IMR-90 (cell line): ENCODE measurements at regions of chr12 and their contacts with region 1.

Region 1: DNA sequence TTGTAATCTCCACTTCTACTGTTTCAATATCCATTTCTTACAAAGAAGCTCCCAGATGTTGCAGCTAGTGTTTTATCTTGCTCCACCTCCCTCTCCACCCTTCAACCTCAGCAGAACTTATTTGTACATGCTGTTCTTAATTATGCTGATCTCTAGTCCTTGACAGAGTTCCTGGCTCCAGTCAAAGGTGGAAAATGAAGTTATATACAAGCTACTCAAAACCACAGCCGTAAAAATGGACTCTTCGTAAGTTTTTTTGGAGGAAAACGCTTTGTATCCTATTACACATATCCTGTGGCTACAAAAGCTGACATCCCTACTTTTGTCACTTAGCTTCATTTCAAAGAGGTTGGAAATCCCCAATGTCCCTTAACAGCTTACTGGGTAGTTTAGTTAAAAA is 1.3 kb downstream of the CLEC1A start:
- DNase-seq: no peak
- ATAC-seq: no peak
- H3K4me3 ChIP-seq: no peak overlapping the region
- H3K27ac ChIP-seq: no peak overlapping the region
- H3K4me1 ChIP-seq: peaks cover 1% of the 10 kb centered on the region; the same call in 1 of the 2 replicates
- H3K27me3 ChIP-seq: no peaks in the 10 kb centered on the region
- CTCF ChIP-seq: no peak
- POLR2A ChIP-seq: no peak
- RAD21 ChIP-seq: no peak

Region 2: DNA sequence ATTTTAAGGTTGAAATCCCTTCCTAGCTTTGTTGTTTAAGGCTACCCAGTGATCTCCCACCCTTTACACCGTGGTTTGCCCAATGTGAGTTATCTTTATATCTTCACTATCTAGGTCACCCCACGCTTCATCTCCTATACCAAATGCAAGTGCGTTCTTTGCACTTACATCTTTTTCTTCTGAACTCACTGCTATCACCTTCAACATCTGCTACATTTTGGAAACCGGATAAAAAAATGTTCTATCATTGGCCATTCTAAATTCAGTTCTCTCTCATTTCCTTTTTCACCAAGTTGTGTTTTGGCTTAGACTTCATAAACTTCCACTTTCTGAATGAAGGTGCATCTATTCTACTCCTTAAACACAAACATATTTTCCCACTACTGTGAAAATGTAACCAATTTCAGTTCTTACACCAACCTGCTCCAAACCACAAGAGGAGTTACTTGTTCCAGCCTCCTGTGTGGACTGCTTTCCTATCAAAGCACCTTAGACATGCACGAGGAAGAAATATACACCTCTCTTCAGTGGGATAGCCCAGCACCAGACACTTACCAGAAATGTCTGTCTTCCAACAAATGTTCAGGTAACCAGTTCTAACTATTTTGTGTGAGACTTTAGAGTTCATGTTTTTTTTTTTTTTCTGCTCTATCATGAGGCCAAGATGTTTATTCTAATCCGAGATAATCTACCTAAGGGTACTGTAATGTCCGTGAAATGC is 45.2 kb before region 1 on chr12:
- CTCF ChIA-PET with region 1: no interaction called
- POLR2A ChIA-PET with region 1: no interaction called
- dilution Hi-C with region 1: no loop called
- in situ Hi-C with region 1: no loop called
- intact Hi-C with region 1: loop called (anchors 5 kb)
- DNase-seq: no peak
- ATAC-seq: no peak
- H3K4me3 ChIP-seq: no peak overlapping the region
- H3K27ac ChIP-seq: no peak overlapping the region
- H3K4me1 ChIP-seq: no peaks in the 10 kb centered on the region
- H3K27me3 ChIP-seq: no peaks in the 10 kb centered on the region; the same call in 1 of the 2 replicates
- CTCF ChIP-seq: no peak
- POLR2A ChIP-seq: no peak
- RAD21 ChIP-seq: no peak

Region 3: GRCh38 chr12:10075451-10075850 is 22.1 kb before region 1 on chr12:
- CTCF ChIA-PET with region 1: interaction called, 3 read pairs
- POLR2A ChIA-PET with region 1: no interaction called
- dilution Hi-C with region 1: no loop called
- in situ Hi-C with region 1: no loop called
- intact Hi-C with region 1: loop called (anchors 1 kb)
- DNase-seq: no peak
- ATAC-seq: no peak
- H3K4me3 ChIP-seq: no peak overlapping the region
- H3K27ac ChIP-seq: no peak overlapping the region
- H3K4me1 ChIP-seq: no peaks in the 10 kb centered on the region
- H3K27me3 ChIP-seq: no peaks in the 10 kb centered on the region; the same call in 1 of the 2 replicates
- CTCF ChIP-seq: no peak
- POLR2A ChIP-seq: no peak
- RAD21 ChIP-seq: no peak